Dendritic cell treated with granulocyte-macrophage colony-stimulating factor and Interleukin-4, amounts not matched to agents 40 ng/mL and 50 ng/mL, for 4 days (primary cell): ENCODE measurements at regions of chr21 and their contacts with region 1.

Region 1: GRCh38 chr21:42164064-42164789 is 54.7 kb upstream of the ABCG1 start:
- H3K4me3 Mint-ChIP-seq: no peak overlapping the region
- H3K27ac Mint-ChIP-seq: peak overlapping the region; percentile 44
- H3K4me1 Mint-ChIP-seq: peaks cover 23% of the 10 kb centered on the region
- H3K27me3 Mint-ChIP-seq: peaks cover 11% of the 10 kb centered on the region

Region 2: DNA sequence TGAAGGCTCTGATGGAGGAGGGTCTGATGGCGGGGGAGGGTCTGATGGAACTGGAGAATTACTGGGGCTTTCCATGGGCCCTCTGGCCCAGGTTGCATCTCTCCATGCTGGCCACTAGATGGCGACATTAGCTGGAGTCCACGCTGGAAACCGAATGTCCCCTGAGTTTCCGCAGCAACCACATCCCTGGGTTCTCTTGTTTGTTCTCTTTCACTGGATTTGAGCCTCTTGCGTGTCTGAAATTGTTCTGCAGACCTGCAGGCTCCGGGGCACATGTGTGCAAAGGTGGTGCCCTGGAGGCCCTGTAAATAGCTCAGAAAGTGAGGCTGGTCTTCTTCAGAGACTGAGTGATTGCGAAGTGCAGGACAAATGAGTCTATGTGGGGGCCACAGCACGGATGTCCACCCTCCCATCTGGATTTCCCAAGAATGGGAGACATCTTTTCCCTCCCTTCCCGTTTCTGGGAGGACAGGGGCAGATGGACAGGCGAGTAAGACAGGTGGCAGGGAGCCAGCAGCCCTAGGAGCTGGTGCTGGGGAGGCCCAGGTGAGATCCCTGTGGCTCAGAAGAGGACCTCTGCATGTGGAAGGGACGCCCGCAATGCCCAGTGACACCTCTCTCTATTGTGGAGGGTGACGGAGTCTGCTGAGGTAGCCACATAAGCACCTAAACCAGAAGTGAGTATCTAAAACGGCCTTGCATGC is 18.5 kb before region 1 on chr21:
- intact Hi-C with region 1: no loop called
- H3K4me3 Mint-ChIP-seq: no peak overlapping the region
- H3K27ac Mint-ChIP-seq: peak overlapping the region; percentile 4
- H3K4me1 Mint-ChIP-seq: peaks cover 33% of the 10 kb centered on the region
- H3K27me3 Mint-ChIP-seq: peaks cover 8% of the 10 kb centered on the region

Region 3: DNA sequence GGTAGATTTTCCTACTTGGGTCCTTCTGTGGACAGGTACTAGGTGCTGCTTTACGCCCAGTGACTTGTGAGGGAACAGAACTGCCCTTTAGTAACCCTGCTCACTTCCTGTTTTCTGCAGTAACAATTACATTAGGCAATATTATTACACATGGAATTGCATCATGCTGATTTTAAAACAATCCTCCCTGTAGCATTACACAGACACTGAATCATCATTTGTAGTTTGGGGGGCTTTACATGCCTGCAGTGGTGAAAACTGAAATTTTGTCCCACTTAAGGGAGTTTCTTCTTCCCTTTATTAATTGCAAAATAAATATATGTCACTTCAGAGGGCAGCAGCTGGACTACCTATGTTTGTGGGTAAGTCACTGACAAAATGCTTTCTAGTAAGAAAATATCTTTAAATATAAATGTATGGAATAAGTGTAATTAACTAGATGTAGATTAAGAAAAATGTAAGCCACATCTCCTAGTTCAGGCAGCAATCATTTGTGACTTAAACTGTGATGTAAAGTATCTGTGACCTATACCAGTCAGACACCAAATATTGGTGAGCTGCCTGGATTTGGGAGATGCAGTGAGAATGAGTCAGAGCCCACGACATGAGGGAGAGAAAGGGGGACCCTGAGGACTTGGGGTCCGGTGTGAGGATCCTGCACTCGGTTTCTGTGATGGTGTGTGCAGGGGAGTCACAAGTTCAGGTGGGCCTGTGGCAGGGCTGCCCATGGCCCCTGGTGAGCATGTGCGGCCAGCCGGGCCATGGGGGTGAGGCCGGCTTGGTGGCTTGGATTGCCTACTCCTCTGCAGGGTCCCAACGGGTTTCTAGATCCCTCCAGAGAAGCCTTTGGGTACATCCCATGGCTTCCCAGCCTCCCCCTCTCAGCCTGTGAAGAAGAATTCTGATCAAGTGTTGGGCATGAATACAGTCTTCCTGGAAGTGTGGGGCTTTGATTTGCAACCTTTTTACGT is 35.5 kb after region 1 on chr21:
- intact Hi-C with region 1: loop called (anchors 5 kb)
- H3K4me3 Mint-ChIP-seq: no peak overlapping the region
- H3K27ac Mint-ChIP-seq: peak overlapping the region; percentile 37
- H3K4me1 Mint-ChIP-seq: peaks cover 56% of the 10 kb centered on the region
- H3K27me3 Mint-ChIP-seq: peaks cover 4% of the 10 kb centered on the region

Region 4: GRCh38 chr21:42258153-42258884 is 94.1 kb after region 1 on chr21:
- intact Hi-C with region 1: loop called (anchors 1 kb)
- H3K4me3 Mint-ChIP-seq: no peak overlapping the region
- H3K27ac Mint-ChIP-seq: no peak overlapping the region
- H3K4me1 Mint-ChIP-seq: peaks cover 66% of the 10 kb centered on the region
- H3K27me3 Mint-ChIP-seq: peaks cover 11% of the 10 kb centered on the region

Region 5: DNA sequence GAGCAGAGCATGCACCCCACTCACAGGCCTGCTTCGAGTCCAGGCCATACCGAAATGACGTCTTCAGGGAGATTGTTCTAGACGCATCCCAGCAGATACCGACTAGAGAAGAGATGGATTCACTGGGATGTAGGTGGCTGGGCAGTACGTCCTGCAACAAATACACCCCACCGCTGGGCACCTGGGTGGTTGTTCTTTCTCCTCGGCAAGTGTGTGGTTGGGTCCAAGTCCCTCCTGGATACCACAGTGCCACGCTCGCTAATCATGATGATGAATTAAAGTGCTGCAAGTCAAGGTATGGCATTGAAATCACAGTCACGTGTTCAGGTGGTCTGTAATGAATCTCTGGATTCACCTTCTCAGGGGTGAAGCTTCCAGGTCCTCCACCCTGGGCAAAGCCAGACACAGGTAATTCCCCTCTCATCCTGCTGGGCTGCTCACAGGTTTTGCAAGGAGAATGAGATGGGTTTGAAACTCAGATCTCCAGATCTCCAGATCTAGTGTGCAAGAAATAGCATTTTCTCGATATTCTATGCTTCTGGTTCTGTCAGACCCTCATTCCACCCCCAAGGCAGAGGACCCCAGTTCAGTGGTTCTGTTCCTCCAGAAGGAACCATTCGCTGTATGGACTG is 285.2 kb after region 1 on chr21:
- intact Hi-C with region 1: loop called (anchors 1 kb)
- H3K4me3 Mint-ChIP-seq: no peak overlapping the region
- H3K27ac Mint-ChIP-seq: no peak overlapping the region
- H3K4me1 Mint-ChIP-seq: peaks cover 12% of the 10 kb centered on the region
- H3K27me3 Mint-ChIP-seq: peaks cover 12% of the 10 kb centered on the region